ENCODE measurements at regions of chr11 and their contacts with region 1.

Region 1: GRCh38 chr11:31958076-31958735 is 132.7 kb upstream of the RCN1 start:
- DNase-seq: peak; percentile 47 to 97
- H3K4me3 ChIP-seq: no peak overlapping the region
- H3K27ac ChIP-seq: no peak overlapping the region
- H3K4me1 ChIP-seq: peaks cover 0 to 5% (median 0%) of the 10 kb centered on the region in 4 experiments; a peak in 1 of 7 replicates
- H3K27me3 ChIP-seq: no peaks in the 10 kb centered on the region; a peak in 1 of 7 replicates
- CTCF ChIP-seq: peak; percentile 90 to 95 (median 94)
- EP300 ChIP-seq: no peak
- POLR2A ChIP-seq: no peak
- RAD21 ChIP-seq: peak; percentile 93 to 94

Region 2: GRCh38 chr11:31397239-31397834 is 560.9 kb before region 1 on chr11:
- CTCF ChIA-PET with region 1: interaction called, 13 read pairs
- POLR2A ChIA-PET with region 1: no interaction called
- DNase-seq: no peak
- H3K4me3 ChIP-seq: no peak overlapping the region
- H3K27ac ChIP-seq: no peak overlapping the region
- H3K4me1 ChIP-seq: no peaks in the 10 kb centered on the region
- H3K27me3 ChIP-seq: no peaks in the 10 kb centered on the region
- CTCF ChIP-seq: peak in 2 of 3 experiments; percentile 42 to 62; a peak in 2 of 4 replicates
- EP300 ChIP-seq: no peak
- POLR2A ChIP-seq: no peak
- RAD21 ChIP-seq: peak in 1 of 2 experiments; percentile 78

Region 3: GRCh38 chr11:31804312-31805036 is 153.7 kb before region 1 on chr11:
- CTCF ChIA-PET with region 1: interaction called, 32 read pairs
- POLR2A ChIA-PET with region 1: no interaction called
- DNase-seq: peak in 1 of 2 experiments; percentile 74
- H3K4me3 ChIP-seq: peak overlapping the region; percentile 11 to 56 (median 38); a peak in 6 of 8 replicates
- H3K27ac ChIP-seq: no peak overlapping the region
- H3K4me1 ChIP-seq: peaks cover 26 to 47% (median 30%) of the 10 kb centered on the region in 4 experiments
- H3K27me3 ChIP-seq: peaks cover 91 to 100% (median 97%) of the 10 kb centered on the region in 4 experiments
- CTCF ChIP-seq: no peak
- EP300 ChIP-seq: no peak
- POLR2A ChIP-seq: no peak
- RAD21 ChIP-seq: no peak

Region 4: DNA sequence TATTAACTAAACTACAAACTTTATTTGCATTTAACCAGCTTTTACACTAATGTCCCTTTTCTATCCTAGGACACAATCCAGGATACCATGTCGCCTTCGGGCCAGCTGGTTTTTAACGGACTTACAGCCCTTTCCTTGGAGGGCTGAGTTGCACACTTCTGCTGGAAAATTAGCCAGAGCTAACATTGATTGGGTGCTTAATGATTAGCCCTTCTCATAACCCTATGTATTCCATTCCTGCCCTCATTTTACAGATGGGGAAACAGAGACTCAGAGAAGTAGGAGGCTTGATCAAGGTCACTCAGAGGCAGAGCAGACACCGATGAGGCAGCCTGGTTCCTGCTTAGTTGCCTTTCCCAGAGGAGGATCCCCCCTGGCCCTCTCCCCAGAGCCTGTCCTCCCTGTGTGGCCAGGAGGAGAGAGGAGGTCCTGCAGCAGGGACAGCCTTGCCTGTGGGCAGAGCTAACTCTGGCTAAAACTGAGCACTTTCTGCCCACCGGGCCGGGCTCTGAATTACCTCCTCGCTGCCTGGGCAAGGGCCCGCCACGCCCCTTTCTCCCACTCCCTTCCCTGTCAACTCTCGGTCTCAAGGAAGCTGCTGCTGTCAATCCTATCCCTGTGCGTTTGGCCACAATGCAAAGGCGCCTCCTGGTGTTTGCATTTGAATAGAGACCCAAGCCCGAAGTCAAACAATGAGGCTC is 87.4 kb before region 1 on chr11:
- CTCF ChIA-PET with region 1: interaction called, 21 read pairs
- POLR2A ChIA-PET with region 1: no interaction called
- DNase-seq: peak; percentile 68 to 84
- H3K4me3 ChIP-seq: peak overlapping the region in 1 of 4 experiments; percentile 41; a peak in 2 of 8 replicates
- H3K27ac ChIP-seq: no peak overlapping the region
- H3K4me1 ChIP-seq: peaks cover 8 to 15% (median 8%) of the 10 kb centered on the region in 4 experiments; a peak in 6 of 7 replicates
- H3K27me3 ChIP-seq: peaks cover 0 to 11% (median 4%) of the 10 kb centered on the region in 4 experiments; a peak in 4 of 7 replicates
- CTCF ChIP-seq: peak; percentile 47 to 82 (median 73)
- EP300 ChIP-seq: no peak
- POLR2A ChIP-seq: no peak
- RAD21 ChIP-seq: peak; percentile 84 to 91

Region 5: DNA sequence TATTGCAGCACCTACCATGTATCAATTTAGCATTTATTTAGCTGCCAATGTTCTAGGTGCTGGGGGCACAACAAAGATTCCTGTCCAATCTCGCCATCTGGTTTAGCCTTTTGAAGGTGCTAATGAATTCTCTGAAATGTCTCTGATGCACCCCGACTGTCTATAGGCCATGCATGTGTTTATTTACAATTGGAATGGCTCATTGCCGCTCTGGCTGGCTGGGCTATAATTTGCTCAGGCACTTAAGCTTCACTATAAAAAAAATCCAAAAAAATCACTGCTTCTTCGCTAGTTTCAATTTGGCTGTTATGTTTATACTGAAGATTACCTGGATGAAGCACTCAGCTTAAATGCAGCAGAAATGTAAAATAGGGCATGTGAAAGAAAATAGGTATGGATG is 32.1 kb before region 1 on chr11:
- CTCF ChIA-PET with region 1: interaction called, 11 read pairs
- POLR2A ChIA-PET with region 1: no interaction called
- DNase-seq: no peak
- H3K4me3 ChIP-seq: no peak overlapping the region
- H3K27ac ChIP-seq: no peak overlapping the region
- H3K4me1 ChIP-seq: no peaks in the 10 kb centered on the region
- H3K27me3 ChIP-seq: no peaks in the 10 kb centered on the region
- CTCF ChIP-seq: no peak
- EP300 ChIP-seq: no peak
- POLR2A ChIP-seq: no peak
- RAD21 ChIP-seq: no peak

Region 6: DNA sequence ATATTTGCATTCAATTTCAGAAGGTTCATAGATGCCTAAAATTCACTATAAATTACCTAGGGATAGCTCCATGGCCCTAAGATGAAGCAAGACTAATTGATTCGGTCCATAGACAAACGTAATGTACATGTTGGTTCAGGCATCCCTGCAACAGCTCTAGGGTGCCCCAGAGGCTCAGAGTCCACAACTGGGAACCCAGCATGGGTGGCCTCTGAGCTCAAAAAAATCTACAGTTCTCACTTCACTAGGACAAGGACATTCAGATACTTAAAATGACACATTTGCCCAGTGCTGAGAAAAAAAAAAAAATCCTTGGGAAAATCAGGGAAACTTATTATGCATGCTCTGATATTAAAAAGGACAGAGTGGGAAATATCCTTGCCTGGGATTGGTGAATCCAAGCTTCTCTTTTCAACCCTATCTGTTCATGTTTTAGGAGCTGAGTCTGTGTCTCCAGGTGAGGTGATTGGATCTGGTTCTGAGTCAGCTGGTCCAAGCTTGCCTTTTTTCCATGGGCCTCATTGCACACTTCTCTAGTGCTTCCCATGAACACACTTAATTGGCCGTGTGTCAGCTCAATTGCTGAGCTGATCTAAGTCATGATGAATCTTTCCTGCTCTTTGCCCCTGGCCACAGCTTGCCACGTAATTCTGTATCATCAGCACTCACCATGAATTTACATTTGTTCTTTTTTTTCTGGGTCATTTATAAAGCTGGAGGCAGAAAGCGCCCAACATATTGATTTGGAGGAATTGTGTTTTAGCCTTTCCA is 16.3 kb after region 1 on chr11:
- CTCF ChIA-PET with region 1: interaction called, 33 read pairs
- POLR2A ChIA-PET with region 1: interaction called, 3 read pairs
- DNase-seq: no peak
- H3K4me3 ChIP-seq: no peak overlapping the region
- H3K27ac ChIP-seq: no peak overlapping the region
- H3K4me1 ChIP-seq: no peaks in the 10 kb centered on the region
- H3K27me3 ChIP-seq: no peaks in the 10 kb centered on the region
- CTCF ChIP-seq: no peak
- EP300 ChIP-seq: no peak
- POLR2A ChIP-seq: no peak
- RAD21 ChIP-seq: no peak

Region 7: GRCh38 chr11:32176223-32176934 is 218.2 kb after region 1 on chr11:
- CTCF ChIA-PET with region 1: interaction called, 20 read pairs
- POLR2A ChIA-PET with region 1: no interaction called
- DNase-seq: peak; percentile 59 to 91
- H3K4me3 ChIP-seq: no peak overlapping the region
- H3K27ac ChIP-seq: no peak overlapping the region
- H3K4me1 ChIP-seq: no peaks in the 10 kb centered on the region
- H3K27me3 ChIP-seq: no peaks in the 10 kb centered on the region
- CTCF ChIP-seq: peak; percentile 65 to 87 (median 84)
- EP300 ChIP-seq: no peak
- POLR2A ChIP-seq: no peak
- RAD21 ChIP-seq: peak; percentile 91 to 94